HepG2 (cell line): ENCODE measurements at regions of chr17 and their contacts with region 1.

Region 1: GRCh38 chr17:15999439-16000350 is at the starts of genes TTC19 and ZSWIM7:
- DNase-seq: peak; percentile 92
- ATAC-seq: peak; percentile 95
- H3K4me3 ChIP-seq: peak within 1 kb of the TSS; percentile 90 to 94 (median 91)
- H3K27ac ChIP-seq: peak within 1 kb of the TSS; percentile 94
- H3K4me1 ChIP-seq: peaks cover 26% of the 10 kb centered on the region
- H3K27me3 ChIP-seq: no peaks in the 10 kb centered on the region; a peak in 1 of 5 replicates
- CTCF ChIP-seq: peak; percentile 69
- EP300 ChIP-seq: no peak
- POLR2A ChIP-seq: peak; percentile 88 to 98
- RAD21 ChIP-seq: peak; percentile 47
- total RNA-seq, gene TTC19: 22.7 and 24.3 TPM in 2 replicates
- total RNA-seq, gene ZSWIM7: 13.1 and 16.8 TPM in 2 replicates

Region 2: DNA sequence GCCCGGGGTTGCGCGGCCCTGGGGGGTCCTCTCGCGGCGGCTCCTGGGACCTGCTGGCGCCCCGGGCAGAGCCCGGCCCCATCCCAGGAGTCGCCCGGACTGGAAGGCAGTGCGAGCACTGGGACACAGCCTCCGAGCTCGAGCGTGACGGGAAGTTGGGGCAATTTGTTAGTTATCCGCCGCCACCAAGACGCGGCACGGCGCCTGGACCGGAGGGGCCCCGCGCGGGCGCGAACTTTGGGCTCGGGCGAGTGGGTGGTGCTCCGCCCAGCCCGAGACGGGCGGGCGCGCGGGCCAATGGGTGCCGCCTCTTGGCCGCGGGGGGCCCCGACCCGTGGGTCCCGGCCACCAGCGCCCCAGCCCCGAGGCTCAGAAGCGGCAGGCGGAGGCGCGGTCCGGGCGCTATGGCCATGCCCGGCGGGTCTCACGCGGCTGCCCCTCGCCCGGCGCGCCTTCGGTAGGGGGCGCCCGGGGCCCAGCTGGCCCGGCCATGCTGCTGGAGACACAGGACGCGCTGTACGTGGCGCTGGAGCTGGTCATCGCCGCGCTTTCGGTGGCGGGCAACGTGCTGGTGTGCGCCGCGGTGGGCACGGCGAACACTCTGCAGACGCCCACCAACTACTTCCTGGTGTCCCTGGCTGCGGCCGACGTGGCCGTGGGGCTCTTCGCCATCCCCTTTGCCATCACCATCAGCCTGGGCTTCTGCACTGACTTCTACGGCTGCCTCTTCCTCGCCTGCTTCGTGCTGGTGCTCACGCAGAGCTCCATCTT is 54.8 kb before region 1 on chr17 and contains the start of gene ADORA2B:
- CTCF ChIA-PET with region 1: interaction called, 7 read pairs
- POLR2A ChIA-PET with region 1: interaction called, 18 read pairs
- in situ Hi-C with region 1: loop called (anchors 5 kb)
- intact Hi-C with region 1: loop called (anchors 2 kb)
- DNase-seq: peak; percentile 60
- ATAC-seq: peak; percentile 85
- H3K4me3 ChIP-seq: peak within 1 kb of the TSS; percentile 66 to 83 (median 79)
- H3K27ac ChIP-seq: peak within 1 kb of the TSS; percentile 45
- H3K4me1 ChIP-seq: peaks cover 46% of the 10 kb centered on the region
- H3K27me3 ChIP-seq: no peaks in the 10 kb centered on the region; a peak in 3 of 5 replicates
- CTCF ChIP-seq: peak; percentile 76
- EP300 ChIP-seq: no peak
- POLR2A ChIP-seq: peak; percentile 44 to 75
- RAD21 ChIP-seq: peak; percentile 82
- total RNA-seq, gene ADORA2B: 6.7 and 10.4 TPM in 2 replicates

Region 3: GRCh38 chr17:15966183-15966878 is 33.4 kb before region 1 on chr17:
- CTCF ChIA-PET with region 1: no interaction called
- POLR2A ChIA-PET with region 1: interaction called, 15 read pairs
- in situ Hi-C with region 1: no loop called
- intact Hi-C with region 1: no loop called
- DNase-seq: peak; percentile 90
- ATAC-seq: peak; percentile 97
- H3K4me3 ChIP-seq: peak overlapping the region; percentile 61 to 75 (median 61)
- H3K27ac ChIP-seq: peak overlapping the region; percentile 84
- H3K4me1 ChIP-seq: peaks cover 50% of the 10 kb centered on the region
- H3K27me3 ChIP-seq: no peaks in the 10 kb centered on the region
- CTCF ChIP-seq: no peak
- EP300 ChIP-seq: peak in 1 of 2 experiments; percentile 23; a peak in 1 of 4 replicates
- POLR2A ChIP-seq: peak; percentile 51 to 52; a peak in 3 of 4 replicates
- RAD21 ChIP-seq: no peak

Region 4: DNA sequence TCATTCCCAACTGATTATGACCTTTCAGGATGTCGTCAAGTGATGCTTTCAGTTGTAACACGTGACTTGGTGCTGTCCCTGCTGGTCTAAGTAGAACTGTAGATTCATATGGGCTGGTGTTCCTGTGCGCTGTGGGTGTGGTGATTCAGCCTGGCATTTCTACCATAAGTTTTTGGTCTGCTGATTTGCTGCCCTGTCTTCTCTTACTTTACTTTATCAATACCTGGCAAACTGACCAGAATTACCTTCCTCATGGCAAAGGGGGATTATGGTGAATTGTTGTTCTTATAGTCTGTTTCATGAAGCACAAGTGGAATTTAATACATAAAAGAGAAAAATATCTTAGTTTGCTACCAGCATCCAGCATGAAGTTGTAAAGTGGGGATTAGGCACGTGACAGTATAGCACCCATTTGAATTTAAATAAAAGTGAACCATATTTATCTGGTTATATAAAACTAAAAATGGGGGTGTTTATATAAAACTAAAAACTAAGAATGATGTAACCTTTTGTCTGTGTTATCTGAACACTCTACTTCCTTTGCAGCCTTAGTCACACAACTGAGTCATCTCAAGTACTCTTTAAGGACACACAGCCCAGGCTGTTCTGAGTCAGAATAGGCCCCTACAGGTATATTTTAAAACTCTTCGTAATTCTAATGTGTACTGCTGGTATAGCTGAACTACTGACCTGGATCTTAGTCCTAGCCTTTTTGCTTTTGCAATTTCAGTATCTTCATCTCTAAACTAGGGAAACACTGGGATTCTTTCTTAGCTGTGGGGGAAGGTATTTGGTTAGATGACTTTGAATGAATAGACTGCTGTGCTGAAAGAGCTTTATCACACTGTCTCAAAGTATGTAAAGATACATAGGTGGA is 28.3 kb after region 1 on chr17:
- CTCF ChIA-PET with region 1: no interaction called
- POLR2A ChIA-PET with region 1: no interaction called
- in situ Hi-C with region 1: no loop called
- intact Hi-C with region 1: no loop called
- DNase-seq: peak; percentile 48
- ATAC-seq: peak; percentile 52
- H3K4me3 ChIP-seq: no peak overlapping the region
- H3K27ac ChIP-seq: peak overlapping the region; percentile 12
- H3K4me1 ChIP-seq: peaks cover 7% of the 10 kb centered on the region; the same call in 1 of the 2 replicates
- H3K27me3 ChIP-seq: no peaks in the 10 kb centered on the region
- CTCF ChIP-seq: no peak
- EP300 ChIP-seq: no peak
- POLR2A ChIP-seq: no peak
- RAD21 ChIP-seq: no peak

Region 5: GRCh38 chr17:16052486-16052885 is 52.8 kb after region 1 on chr17:
- CTCF ChIA-PET with region 1: no interaction called
- POLR2A ChIA-PET with region 1: no interaction called
- in situ Hi-C with region 1: no loop called
- intact Hi-C with region 1: no loop called
- DNase-seq: no peak
- ATAC-seq: no peak
- H3K4me3 ChIP-seq: no peak overlapping the region
- H3K27ac ChIP-seq: no peak overlapping the region
- H3K4me1 ChIP-seq: no peaks in the 10 kb centered on the region
- H3K27me3 ChIP-seq: no peaks in the 10 kb centered on the region
- CTCF ChIP-seq: no peak
- EP300 ChIP-seq: no peak
- POLR2A ChIP-seq: no peak
- RAD21 ChIP-seq: no peak

Region 6: DNA sequence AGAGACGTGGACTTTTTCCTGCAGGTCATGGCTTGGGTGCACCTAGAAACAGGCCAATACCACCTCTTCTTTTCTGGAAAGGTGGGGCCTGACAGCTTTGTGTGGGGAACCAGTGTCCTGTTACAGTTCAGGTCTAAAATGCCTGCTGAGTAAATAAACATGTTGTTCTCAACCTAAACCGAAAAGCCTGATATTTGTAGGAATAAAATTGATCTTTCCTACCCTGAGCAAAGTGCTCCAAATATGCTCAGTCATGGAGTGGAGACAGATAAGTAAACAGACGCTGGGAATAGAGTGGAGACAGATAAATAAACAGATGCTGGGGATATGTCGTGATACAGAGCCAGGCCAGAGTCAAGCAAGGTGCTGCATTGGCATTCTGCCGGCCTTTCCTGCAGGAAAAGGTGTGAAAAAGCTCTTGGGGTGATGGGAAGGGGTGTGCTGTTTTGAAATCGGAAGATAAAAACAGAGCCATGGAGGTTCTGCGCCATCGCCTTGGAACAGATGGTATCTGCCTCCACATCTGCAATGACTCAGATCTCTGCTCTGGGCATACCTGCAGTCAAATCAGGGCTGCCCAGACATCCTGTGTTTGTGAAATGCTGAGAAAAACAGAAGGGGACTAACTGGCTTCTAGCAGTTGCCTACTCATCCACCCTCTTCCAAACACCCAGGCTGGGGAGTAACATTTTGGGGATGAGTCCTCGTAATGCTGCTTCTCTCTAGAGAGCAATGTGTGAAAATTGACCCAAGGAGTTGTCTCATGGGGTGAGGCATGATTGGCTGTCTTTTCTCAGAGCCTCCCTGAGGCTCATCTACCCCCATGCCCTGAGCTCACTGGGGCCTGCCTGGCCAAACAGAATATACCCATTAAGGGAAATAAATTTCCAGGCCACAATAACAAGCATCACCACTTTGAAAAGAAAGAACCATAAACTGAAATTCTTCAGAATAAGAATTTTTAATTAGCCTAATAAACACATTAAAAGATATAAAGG is 398.9 kb after region 1 on chr17:
- CTCF ChIA-PET with region 1: no interaction called
- POLR2A ChIA-PET with region 1: no interaction called
- in situ Hi-C with region 1: no loop called
- intact Hi-C with region 1: loop called (anchors 5 kb)
- DNase-seq: peak; percentile 79
- ATAC-seq: peak; percentile 86
- H3K4me3 ChIP-seq: peak overlapping the region in 2 of 3 experiments; percentile 45 to 47; a peak in 4 of 6 replicates
- H3K27ac ChIP-seq: peak overlapping the region; percentile 76
- H3K4me1 ChIP-seq: peaks cover 58% of the 10 kb centered on the region
- H3K27me3 ChIP-seq: no peaks in the 10 kb centered on the region
- CTCF ChIP-seq: no peak
- EP300 ChIP-seq: no peak
- POLR2A ChIP-seq: no peak
- RAD21 ChIP-seq: no peak